ENCODE measurements at regions of chr12 and their contacts with region 1.

Region 1: GRCh38 chr12:76790564-76791552 is 26.9 kb downstream of the ZDHHC17 start:
- DNase-seq: peak in 3 of 14 experiments; percentile 48 to 58 (median 53)
- ATAC-seq: peak; percentile 58
- H3K4me3 ChIP-seq: no peak overlapping the region
- H3K4me3 Mint-ChIP-seq: no peak overlapping the region
- H3K27ac ChIP-seq: no peak overlapping the region
- H3K27ac Mint-ChIP-seq: peak overlapping the region; percentile 0
- H3K4me1 ChIP-seq: no peaks in the 10 kb centered on the region
- H3K4me1 Mint-ChIP-seq: peaks cover 50% of the 10 kb centered on the region
- H3K27me3 ChIP-seq: no peaks in the 10 kb centered on the region
- H3K27me3 Mint-ChIP-seq: no peaks in the 10 kb centered on the region
- CTCF ChIP-seq: peak; percentile 87

Region 2: DNA sequence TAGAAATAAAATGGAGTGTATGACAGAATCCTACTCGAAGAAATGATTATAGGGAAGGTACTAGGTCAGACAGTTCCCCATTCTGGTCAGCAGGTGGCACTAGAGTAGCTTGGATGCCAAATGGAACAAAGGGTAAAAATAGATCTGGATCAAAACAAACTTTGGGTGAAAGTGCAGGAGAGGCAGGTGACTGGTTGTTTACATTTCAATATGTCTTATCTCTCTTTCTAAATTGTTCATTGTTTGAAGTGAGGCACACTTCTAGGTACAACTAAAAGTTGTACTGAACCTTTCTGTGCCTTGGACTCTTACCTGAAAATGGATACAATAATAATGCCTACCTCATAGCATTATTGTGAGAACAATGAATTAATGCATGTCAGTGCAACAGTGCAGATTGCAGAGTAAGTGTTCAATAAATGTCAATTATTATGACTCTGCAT is 169.3 kb before region 1 on chr12:
- CTCF ChIA-PET with region 1: interaction called, 24 read pairs
- POLR2A ChIA-PET with region 1: no interaction called
- intact Hi-C with region 1: loop called (anchors 1 kb)
- DNase-seq: peak; percentile 50 to 84 (median 64)
- ATAC-seq: peak; percentile 97
- H3K4me3 ChIP-seq: no peak overlapping the region
- H3K4me3 Mint-ChIP-seq: no peak overlapping the region
- H3K27ac ChIP-seq: no peak overlapping the region
- H3K27ac Mint-ChIP-seq: no peak overlapping the region
- H3K4me1 ChIP-seq: no peaks in the 10 kb centered on the region
- H3K4me1 Mint-ChIP-seq: peaks cover 6% of the 10 kb centered on the region
- H3K27me3 ChIP-seq: no peaks in the 10 kb centered on the region
- H3K27me3 Mint-ChIP-seq: no peaks in the 10 kb centered on the region
- CTCF ChIP-seq: peak; percentile 97

Region 3: DNA sequence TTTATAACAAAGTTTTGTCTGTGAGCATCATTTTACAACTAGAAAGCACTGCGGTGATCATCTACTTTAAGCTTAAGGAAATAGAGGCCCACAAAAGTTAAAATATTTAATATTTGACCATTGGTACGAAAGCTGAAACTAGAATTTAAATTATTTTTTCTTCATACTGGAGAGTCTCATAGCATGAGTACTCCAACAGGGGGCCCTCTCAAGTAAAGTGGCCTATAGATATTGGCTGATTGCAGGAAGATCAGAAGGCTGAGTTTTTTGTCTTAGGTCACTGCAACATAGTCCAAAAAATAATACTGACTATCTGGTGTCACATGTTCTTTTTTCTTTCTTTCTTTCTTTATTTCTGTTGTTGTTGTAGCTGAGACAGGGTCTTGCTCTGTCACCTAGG is 102.2 kb before region 1 on chr12:
- CTCF ChIA-PET with region 1: no interaction called
- POLR2A ChIA-PET with region 1: no interaction called
- intact Hi-C with region 1: loop called (anchors 2 kb)
- DNase-seq: peak in 3 of 14 experiments; percentile 9 to 24 (median 23)
- ATAC-seq: no peak
- H3K4me3 ChIP-seq: no peak overlapping the region
- H3K4me3 Mint-ChIP-seq: no peak overlapping the region
- H3K27ac ChIP-seq: no peak overlapping the region
- H3K27ac Mint-ChIP-seq: no peak overlapping the region
- H3K4me1 ChIP-seq: no peaks in the 10 kb centered on the region
- H3K4me1 Mint-ChIP-seq: peaks cover 4% of the 10 kb centered on the region
- H3K27me3 ChIP-seq: no peaks in the 10 kb centered on the region
- H3K27me3 Mint-ChIP-seq: no peaks in the 10 kb centered on the region
- CTCF ChIP-seq: peak; percentile 36

Region 4: GRCh38 chr12:76763743-76764675 is 26.8 kb before region 1 on chr12 and contains the start of gene ZDHHC17:
- CTCF ChIA-PET with region 1: interaction called, 6 read pairs
- POLR2A ChIA-PET with region 1: interaction called, 13 read pairs
- intact Hi-C with region 1: no loop called
- DNase-seq: peak; percentile 86 to 96 (median 92)
- ATAC-seq: peak; percentile 81
- H3K4me3 ChIP-seq: peak within 1 kb of the TSS; percentile 95
- H3K4me3 Mint-ChIP-seq: peak within 1 kb of the TSS; percentile 99
- H3K27ac ChIP-seq: peak within 1 kb of the TSS; percentile 85 to 95
- H3K27ac Mint-ChIP-seq: peak within 1 kb of the TSS; percentile 99
- H3K4me1 ChIP-seq: peaks cover 29% of the 10 kb centered on the region
- H3K4me1 Mint-ChIP-seq: peaks cover 60% of the 10 kb centered on the region
- H3K27me3 ChIP-seq: no peaks in the 10 kb centered on the region
- H3K27me3 Mint-ChIP-seq: no peaks in the 10 kb centered on the region
- CTCF ChIP-seq: no peak
- total RNA-seq, gene ZDHHC17: 36.4 to 42.6 TPM

Region 5: GRCh38 chr12:77010691-77011548 is 220.1 kb after region 1 on chr12:
- CTCF ChIA-PET with region 1: no interaction called
- POLR2A ChIA-PET with region 1: no interaction called
- intact Hi-C with region 1: loop called (anchors 1 to 5 kb)
- DNase-seq: peak; percentile 32 to 71 (median 52)
- ATAC-seq: peak; percentile 72
- H3K4me3 ChIP-seq: no peak overlapping the region
- H3K4me3 Mint-ChIP-seq: no peak overlapping the region
- H3K27ac ChIP-seq: no peak overlapping the region
- H3K27ac Mint-ChIP-seq: no peak overlapping the region
- H3K4me1 ChIP-seq: no peaks in the 10 kb centered on the region
- H3K4me1 Mint-ChIP-seq: peaks cover 6% of the 10 kb centered on the region
- H3K27me3 ChIP-seq: peaks cover 0 to 5% of the 10 kb centered on the region in 2 experiments
- H3K27me3 Mint-ChIP-seq: peaks cover 23% of the 10 kb centered on the region
- CTCF ChIP-seq: peak; percentile 93